Aorta (tissue), 5 donors: ENCODE measurements at regions of chr17 and their contacts with region 1.

Region 1: GRCh38 chr17:41548844-41549595 is 20.9 kb upstream of the KRT19 start:
- DNase-seq: peak; percentile 91 to 94
- ATAC-seq: peak; percentile 88
- H3K4me3 ChIP-seq: no peak overlapping the region
- H3K27ac ChIP-seq: no peak overlapping the region
- H3K4me1 ChIP-seq: no peaks in the 10 kb centered on the region
- H3K27me3 ChIP-seq: no peaks in the 10 kb centered on the region

Region 2: GRCh38 chr17:40803617-40804082 is 745.4 kb before region 1 on chr17:
- intact Hi-C with region 1: loop called (anchors 5 to 10 kb)
- DNase-seq: peak; percentile 75 to 90
- ATAC-seq: peak; percentile 74
- H3K4me3 ChIP-seq: no peak overlapping the region
- H3K27ac ChIP-seq: no peak overlapping the region
- H3K4me1 ChIP-seq: no peaks in the 10 kb centered on the region
- H3K27me3 ChIP-seq: no peaks in the 10 kb centered on the region

Region 3: GRCh38 chr17:40818733-40819527 is 730.1 kb before region 1 on chr17:
- intact Hi-C with region 1: loop called in 1 of 2 experiments (anchors 5 kb)
- DNase-seq: peak; percentile 86 to 95
- ATAC-seq: peak; percentile 93
- H3K4me3 ChIP-seq: peak overlapping the region; percentile 77 to 78
- H3K27ac ChIP-seq: peak overlapping the region; percentile 57 to 85
- H3K4me1 ChIP-seq: no peaks in the 10 kb centered on the region
- H3K27me3 ChIP-seq: no peaks in the 10 kb centered on the region

Region 4: DNA sequence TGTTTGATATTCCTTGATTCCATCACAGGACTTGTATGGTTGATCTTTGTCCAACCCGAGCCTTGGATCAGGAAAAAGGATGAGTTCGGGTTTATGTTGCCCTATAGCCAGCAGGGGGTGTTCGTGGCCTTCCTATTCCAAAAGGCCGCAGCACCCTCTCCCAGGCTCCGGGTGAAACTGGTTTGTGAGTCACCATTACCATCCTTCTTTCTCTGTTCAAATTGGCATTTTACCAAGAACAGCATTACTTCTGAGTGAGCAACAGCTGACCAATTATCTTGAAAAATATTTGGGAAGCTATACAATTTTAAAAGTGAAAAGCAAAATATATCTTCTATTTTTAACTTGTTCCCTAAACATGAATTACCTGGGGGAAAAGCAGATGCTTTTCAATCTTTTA is 639.7 kb before region 1 on chr17:
- intact Hi-C with region 1: loop called (anchors 1 to 5 kb)
- DNase-seq: peak; percentile 81 to 87
- ATAC-seq: peak; percentile 95
- H3K4me3 ChIP-seq: no peak overlapping the region
- H3K27ac ChIP-seq: no peak overlapping the region
- H3K4me1 ChIP-seq: peaks cover 0 to 7% of the 10 kb centered on the region in 2 donors
- H3K27me3 ChIP-seq: no peaks in the 10 kb centered on the region

Region 5: GRCh38 chr17:41492771-41493170 is 56.2 kb before region 1 on chr17:
- intact Hi-C with region 1: loop called in 1 of 2 experiments (anchors 5 kb)
- DNase-seq: peak; percentile 41 to 62
- ATAC-seq: no peak
- H3K4me3 ChIP-seq: no peak overlapping the region
- H3K27ac ChIP-seq: no peak overlapping the region
- H3K4me1 ChIP-seq: no peaks in the 10 kb centered on the region
- H3K27me3 ChIP-seq: no peaks in the 10 kb centered on the region

Region 6: DNA sequence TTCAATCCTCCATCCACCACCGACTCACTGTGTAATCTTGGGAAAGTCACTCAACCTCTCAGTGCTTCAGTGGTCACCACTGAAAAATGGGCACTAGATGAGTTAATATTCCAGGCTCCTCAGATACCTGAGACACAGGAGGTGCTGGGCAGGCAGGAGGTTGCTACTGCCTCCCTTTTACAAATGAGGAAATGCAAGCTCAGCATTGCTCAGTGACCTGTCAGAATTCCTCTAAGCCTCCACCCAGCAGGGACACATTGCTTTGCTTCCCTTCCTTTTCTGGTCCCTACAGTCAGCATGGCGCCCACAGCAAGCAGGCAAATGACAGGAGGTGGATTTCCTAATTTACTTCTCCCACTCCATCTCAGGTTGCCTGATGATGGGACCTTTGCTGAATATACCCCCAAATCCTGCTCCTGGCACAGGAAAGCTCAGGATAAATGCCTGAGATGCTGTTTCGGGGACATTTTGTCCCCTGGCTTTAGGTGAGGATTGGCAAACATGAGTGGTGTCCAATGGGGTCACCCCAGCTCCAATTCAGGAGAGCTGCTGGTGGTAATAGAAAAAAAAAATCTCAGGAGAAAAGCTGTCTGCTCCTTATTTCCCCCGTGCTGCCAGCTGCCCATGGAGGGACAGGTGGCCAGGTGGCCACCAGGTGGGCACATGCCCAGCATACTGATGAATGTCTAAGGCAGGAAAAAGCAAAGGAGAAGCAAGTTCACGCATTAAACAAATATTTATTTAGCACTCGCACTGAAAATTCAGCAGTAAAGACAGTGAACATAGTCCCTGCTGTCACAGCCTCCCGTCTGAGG is 38.6 kb before region 1 on chr17:
- intact Hi-C with region 1: no loop called
- DNase-seq: no peak
- ATAC-seq: no peak
- H3K4me3 ChIP-seq: no peak overlapping the region
- H3K27ac ChIP-seq: no peak overlapping the region
- H3K4me1 ChIP-seq: no peaks in the 10 kb centered on the region
- H3K27me3 ChIP-seq: no peaks in the 10 kb centered on the region

Region 7: DNA sequence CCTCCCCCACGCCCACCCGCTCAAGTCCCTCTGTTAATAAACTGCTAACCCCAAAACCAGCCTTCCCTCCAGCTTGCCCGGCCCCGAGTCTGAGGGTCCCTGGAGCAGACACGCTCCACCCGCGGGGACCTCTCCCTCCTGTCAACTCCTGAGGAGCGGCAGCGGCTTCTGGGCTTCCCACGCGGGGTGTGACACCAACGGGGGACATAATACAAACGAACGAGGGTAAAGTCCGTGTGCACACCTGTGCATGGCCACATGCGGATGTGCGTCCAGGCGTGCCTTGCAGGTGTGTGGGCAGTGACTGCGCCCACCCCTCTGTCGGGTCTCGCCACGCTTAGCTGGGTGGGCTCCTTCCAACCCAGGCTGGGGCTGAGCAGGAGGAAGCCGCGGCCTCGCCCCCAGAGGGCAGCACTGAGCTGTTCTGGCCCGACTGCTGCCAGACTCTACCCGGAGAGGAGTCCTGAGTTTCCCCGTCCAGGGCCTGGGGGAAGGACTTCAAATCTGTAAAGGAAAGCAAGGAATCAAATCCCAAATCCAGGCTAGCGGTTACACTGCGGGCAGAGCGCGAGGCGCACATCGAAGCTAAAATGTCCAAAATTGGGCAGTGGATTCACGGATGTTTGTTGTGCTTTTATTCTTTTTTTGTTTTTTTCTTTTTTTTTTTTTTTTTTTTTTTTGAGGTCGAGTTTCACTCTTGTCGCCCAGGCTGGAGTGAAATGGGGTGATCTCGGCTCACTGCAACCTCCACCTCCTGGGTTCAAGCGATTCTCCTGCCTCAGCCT is 99.6 kb after region 1 on chr17:
- intact Hi-C with region 1: loop called (anchors 1 to 2 kb)
- DNase-seq: peak; percentile 92 to 97
- ATAC-seq: peak; percentile 95
- H3K4me3 ChIP-seq: no peak overlapping the region
- H3K27ac ChIP-seq: no peak overlapping the region
- H3K4me1 ChIP-seq: peaks cover 0 to 3% of the 10 kb centered on the region in 2 donors
- H3K27me3 ChIP-seq: no peaks in the 10 kb centered on the region